ENCODE measurements at regions of chr1 and their contacts with region 1.

Region 1: DNA sequence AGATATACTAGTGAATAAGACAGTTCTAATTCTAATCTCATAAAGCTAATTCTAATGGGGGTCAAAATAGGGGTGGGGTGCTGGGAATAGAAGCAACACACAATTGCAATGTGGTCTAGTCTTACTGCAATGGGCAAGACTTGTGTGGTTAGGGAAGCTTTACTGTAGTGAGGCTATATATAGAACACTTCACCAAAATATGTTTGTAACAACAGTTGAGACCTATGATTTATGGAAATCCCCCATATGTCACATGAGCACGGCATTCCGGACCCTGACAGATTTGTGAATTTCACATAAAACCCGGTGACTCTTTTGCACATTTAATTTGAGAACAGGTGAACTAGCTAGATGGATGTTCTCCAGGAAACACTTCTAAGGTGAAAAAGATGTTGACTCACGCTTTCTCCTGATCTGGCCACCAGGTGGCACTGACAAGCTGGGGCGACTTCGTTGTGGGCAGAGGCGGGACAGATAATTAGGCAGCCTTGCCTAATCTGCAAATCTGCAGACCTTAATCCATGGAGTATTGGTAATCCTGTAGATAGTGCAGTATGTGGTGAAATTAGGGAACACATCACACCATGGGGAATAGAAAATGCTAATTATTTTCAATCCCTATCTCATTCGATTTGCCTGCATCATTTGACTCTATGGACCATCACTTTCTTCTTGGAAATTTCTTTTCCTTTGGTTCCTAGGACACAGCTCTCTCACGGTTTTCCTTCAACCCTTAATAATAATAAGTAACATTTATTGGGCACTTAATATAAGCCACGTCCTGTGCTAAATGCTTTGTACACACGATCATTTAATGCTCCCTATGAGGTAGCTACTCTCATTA is 37.7 kb downstream of the KIAA0040 start:
- DNase-seq: peak; percentile 59
- H3K4me3 Mint-ChIP-seq: no peak overlapping the region
- H3K27ac Mint-ChIP-seq: no peak overlapping the region
- H3K4me1 Mint-ChIP-seq: peaks cover 22% of the 10 kb centered on the region
- H3K27me3 Mint-ChIP-seq: peaks cover 36% of the 10 kb centered on the region

Region 2: DNA sequence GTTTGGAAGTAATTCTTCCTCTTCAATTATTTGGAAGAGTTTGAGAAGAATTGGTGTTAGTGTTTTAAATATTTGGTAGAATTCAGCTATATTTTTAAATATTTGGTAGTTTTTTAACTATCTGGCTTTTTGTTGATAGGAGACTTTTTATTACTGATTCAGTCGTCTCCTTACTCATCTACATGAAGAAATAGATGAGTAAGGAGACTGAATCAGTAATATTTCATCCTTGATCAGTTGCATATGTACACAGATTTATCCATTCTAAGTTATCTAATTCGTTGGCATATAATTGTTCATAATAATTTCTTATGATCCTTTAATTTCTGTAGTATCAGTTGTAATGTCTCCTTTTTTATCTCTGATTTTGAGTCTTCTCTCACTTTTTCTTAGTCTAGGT is 483.0 kb before region 1 on chr1:
- intact Hi-C with region 1: no loop called
- DNase-seq: no peak
- H3K4me3 Mint-ChIP-seq: no peak overlapping the region
- H3K27ac Mint-ChIP-seq: no peak overlapping the region
- H3K4me1 Mint-ChIP-seq: no peaks in the 10 kb centered on the region
- H3K27me3 Mint-ChIP-seq: no peaks in the 10 kb centered on the region

Region 3: GRCh38 chr1:175208773-175209492 is 54.1 kb after region 1 on chr1:
- intact Hi-C with region 1: loop called (anchors 5 kb)
- DNase-seq: peak; percentile 60
- H3K4me3 Mint-ChIP-seq: peak overlapping the region; percentile 78
- H3K27ac Mint-ChIP-seq: peak overlapping the region; percentile 98
- H3K4me1 Mint-ChIP-seq: peaks cover 72% of the 10 kb centered on the region
- H3K27me3 Mint-ChIP-seq: no peaks in the 10 kb centered on the region

Region 4: GRCh38 chr1:175237389-175237788 is 82.5 kb after region 1 on chr1:
- intact Hi-C with region 1: loop called (anchors 5 kb)
- DNase-seq: no peak
- H3K4me3 Mint-ChIP-seq: peak overlapping the region; percentile 3
- H3K27ac Mint-ChIP-seq: peak overlapping the region; percentile 6
- H3K4me1 Mint-ChIP-seq: peaks cover 29% of the 10 kb centered on the region
- H3K27me3 Mint-ChIP-seq: peaks cover 2% of the 10 kb centered on the region

Region 5: DNA sequence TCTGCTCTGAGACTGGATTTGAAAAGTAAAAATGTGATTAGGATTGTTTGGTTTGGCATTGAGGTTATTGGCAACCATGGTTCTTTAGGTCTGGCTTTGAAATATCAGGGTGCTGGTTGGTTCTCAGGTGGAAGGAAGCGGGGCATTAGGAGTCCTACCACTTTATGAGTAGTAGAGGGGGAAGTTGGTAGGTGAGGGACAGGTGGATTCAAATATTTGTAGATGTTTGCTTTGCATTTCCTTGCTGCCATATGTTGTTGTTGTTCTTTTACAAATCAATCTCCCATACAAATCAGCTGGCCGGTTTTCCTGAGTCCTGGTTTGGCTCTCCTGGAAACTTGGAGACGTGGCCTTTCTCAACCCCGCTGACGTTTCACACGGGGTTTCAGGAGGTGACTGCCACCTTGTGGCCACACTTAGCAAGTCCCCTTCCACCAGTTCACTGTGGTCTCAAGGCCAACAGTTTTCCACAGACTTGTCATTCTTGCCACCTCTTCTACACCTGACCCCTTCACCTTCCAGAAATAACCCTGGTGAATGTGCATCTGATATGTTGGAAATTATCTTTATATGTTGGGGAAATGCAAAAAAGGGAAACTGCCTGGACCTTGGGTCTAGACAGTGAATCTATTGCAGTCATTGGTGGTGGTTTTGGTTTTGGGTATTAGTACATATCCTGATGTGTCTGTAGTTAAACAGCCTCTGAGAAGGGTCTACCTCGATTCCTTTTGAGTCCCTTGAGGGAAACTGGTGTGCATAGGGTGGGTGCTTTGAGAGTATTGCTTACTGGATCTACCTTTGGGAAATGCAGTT is 164.8 kb after region 1 on chr1:
- intact Hi-C with region 1: loop called (anchors 1 kb)
- DNase-seq: peak; percentile 48
- H3K4me3 Mint-ChIP-seq: no peak overlapping the region
- H3K27ac Mint-ChIP-seq: no peak overlapping the region
- H3K4me1 Mint-ChIP-seq: peaks cover 8% of the 10 kb centered on the region
- H3K27me3 Mint-ChIP-seq: peaks cover 6% of the 10 kb centered on the region

Region 6: DNA sequence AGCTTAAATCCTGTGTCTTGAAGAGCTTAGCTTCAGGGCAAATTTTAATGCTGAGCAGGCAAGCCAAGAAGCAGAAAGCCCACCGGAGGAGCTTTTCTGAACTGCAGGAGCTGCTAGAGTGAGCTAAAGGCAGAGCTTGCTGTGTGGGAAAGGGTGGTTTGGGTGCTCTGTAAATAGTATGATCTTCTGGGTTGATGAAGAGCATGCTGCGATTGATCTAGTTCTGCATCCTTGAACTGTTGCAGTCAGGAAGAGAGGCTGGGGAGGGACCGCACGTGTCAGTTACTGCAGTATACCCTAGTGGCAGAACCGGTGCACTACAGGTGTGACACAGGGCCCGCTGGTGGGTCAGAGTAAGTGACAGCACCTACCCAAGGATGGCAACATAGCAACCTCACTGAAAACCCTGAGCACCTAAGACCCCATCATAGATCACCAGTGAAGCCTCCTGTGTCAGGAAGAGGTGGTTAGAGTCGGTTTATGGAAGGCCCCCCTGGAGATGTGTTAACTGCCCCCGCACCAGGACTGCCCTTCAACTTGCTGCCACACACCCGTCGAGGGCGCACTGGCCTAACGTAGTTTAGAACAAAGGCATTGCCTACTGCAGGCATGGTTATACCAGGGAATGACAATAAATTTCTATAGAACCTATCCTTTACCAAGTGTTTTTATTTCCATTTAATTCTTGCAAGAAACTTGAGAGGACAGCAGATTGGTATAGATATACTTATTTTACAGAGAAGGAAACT is 183.7 kb after region 1 on chr1:
- intact Hi-C with region 1: loop called (anchors 5 kb)
- DNase-seq: peak; percentile 44
- H3K4me3 Mint-ChIP-seq: no peak overlapping the region
- H3K27ac Mint-ChIP-seq: no peak overlapping the region
- H3K4me1 Mint-ChIP-seq: no peaks in the 10 kb centered on the region
- H3K27me3 Mint-ChIP-seq: peaks cover 26% of the 10 kb centered on the region

Region 7: DNA sequence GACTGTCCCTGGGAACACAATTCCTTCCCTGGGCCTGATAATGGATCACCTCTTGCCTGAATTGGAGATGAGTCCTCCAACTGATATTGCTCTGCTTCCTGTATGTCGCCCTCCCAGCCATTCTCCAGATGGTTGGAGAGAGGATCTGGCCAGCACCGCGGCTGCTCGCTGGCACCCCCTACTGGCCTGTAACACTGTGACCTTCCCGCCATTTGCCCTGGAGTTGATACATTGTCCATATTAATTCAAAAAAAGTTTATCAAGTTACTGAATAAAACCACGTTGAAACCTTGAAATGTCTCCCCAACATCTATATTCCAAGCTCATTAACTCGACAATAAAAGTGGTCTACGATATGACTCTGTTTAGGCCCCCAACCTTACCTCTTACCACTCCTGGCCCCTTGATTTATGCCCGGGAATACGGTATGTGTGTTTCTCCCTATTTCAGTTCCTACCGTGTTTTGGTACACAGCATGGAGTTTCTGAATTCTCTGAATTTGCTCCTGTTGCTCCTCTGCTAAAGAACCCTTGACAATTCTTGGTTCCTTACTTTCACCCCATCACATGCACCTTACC is 279.5 kb after region 1 on chr1:
- intact Hi-C with region 1: loop called (anchors 5 kb)
- DNase-seq: no peak
- H3K4me3 Mint-ChIP-seq: no peak overlapping the region
- H3K27ac Mint-ChIP-seq: no peak overlapping the region
- H3K4me1 Mint-ChIP-seq: no peaks in the 10 kb centered on the region
- H3K27me3 Mint-ChIP-seq: peaks cover 10% of the 10 kb centered on the region

Measured in activated T-helper 2 cell treated with anti-CD3 and anti-CD28 coated beads, Interferon-gamma antibody, Interleukin-2, Interleukin-4, amounts not matched to agents 10 μg/mL and 5 μg/mL and 100 μg/mL, durations not matched to agents 14 hours and 24 hours and 36 hours (primary cell).